GM10248 (cell line): ENCODE measurements at regions of chr9 and their contacts with region 1.

Region 1: DNA sequence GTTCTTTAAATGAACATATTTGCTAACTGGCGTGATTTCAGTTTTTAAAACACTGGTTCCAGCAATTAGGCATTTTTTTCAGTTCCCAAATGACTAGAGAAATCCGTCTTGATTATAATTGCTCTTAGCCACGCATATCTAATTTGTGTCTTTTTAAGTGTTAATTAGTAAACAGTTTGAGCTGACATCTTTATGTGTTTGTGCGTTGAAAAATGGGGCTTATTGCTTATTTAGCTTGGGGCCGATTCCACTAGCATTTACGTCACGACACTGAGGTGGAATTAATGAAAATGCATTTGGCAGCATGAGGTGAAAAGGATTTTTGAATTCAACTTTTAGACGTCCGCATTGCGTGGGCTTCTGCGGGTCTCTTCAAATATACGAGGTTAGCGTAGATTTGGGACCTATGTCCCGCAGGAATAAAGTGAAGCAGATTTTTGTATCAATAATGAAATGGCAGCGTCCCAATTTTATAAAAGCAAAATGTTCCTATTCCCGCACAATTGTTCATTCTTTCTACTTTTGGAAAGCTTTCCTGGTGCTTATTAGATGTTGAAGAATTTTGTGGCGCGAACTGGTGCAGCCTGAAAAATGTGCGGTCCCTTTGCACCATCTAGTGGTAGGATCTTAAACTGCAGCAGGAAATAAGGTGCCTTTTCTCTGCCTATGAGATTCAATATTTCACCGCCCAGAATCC is 122.7 kb upstream of the LMX1B start:
- DNase-seq: peak; percentile 69
- CTCF ChIP-seq: peak; percentile 74

Region 2: DNA sequence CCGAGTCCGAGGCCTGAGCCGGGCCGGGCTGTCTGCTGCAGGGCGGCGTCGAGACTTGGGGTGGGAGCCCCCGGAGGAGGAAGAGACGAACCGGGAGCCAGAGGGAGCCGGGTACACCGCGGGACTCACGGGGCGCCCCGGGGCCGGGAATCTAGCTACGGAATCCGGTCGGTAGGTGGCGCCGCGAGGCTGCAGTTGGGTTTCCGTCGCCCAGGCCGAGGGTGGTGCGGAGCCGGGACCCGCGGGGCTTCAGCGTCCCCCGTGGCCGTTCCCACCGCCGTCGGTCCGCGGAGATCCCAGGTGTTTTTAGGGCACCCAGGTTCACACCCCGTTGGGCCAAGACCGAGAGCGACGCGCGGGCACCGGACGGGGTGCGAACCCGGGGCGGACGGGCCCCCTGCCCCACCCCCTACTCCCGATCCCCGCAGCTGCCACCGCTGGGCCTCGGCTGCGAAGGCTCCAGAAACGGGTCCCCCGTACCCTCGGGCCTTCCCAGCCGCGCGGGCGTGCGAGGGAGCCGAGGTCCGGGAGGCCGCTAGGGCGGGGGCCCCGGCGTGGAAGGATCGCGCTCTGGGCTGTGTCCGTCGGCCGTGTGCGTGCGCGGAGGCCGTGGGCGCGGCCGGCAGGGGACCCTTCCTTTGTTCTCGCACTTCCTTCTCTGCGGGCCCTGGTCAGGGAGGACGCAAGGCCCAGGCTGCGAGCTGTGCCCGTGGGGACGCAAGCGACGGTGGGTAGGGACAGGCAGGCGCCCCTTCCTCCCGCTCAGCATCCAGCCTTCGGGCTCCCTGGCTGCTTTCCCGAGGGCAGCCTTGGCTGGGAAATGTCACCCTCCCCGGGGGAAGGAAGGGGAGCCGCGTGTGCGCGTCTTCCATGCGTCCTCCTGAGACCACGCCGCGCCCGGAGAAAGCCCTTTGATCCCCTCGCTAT is 1082.8 kb before region 1 on chr9:
- CTCF ChIA-PET with region 1: interaction called, 45 read pairs
- POLR2A ChIA-PET with region 1: no interaction called
- DNase-seq: peak; percentile 92
- CTCF ChIP-seq: peak; percentile 88

Region 3: GRCh38 chr9:126301985-126302603 is 188.9 kb before region 1 on chr9:
- CTCF ChIA-PET with region 1: interaction called, 10 read pairs
- POLR2A ChIA-PET with region 1: no interaction called
- DNase-seq: peak; percentile 44
- CTCF ChIP-seq: peak; percentile 51

Region 4: DNA sequence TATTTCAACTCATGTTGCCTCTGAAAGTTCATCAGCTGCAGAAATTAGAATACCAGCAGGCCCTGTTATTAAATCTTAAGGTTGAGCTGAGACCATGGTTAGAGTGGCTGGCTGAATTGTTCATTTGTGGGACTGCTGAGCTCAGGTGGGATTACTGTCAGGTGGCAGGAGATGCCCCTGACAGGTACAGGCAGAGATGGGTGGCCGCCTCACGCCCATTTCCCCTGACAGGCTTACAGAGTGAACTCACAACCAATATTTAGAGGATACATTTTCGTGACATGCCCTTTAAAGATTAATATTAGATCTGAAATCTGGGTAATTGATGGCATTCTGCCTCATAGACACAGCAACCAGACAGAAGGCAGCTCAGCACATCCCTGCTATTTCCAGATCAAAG is 28.4 kb before region 1 on chr9:
- CTCF ChIA-PET with region 1: interaction called, 13 read pairs
- POLR2A ChIA-PET with region 1: no interaction called
- DNase-seq: no peak
- CTCF ChIP-seq: no peak

Region 5: DNA sequence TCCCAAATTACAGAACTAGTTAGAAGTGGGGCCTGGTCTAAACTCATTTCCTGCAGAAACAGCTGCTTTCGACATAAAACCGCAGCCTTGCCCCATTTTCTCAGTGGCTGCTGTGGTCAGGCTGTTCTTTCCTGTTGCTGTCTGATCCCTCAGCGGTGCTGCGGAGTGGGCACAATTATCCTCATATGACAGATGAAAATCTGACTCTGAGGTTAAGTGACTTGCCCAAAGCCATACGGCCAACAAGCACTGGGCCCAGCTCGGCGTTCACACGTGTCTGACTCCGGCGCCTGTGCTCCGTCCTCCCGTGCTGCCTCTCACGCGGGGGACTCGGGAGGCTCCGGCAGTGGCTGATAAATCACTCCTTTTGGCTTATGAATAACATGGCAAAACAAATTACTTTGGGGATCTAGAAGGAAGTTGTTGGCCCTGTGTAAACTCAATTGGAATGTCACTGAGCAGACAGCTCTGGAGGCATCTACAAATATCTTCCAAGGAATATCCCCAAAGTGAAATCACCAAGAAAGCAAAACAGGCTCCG is 19.9 kb before region 1 on chr9:
- CTCF ChIA-PET with region 1: interaction called, 16 read pairs
- POLR2A ChIA-PET with region 1: no interaction called
- DNase-seq: peak; percentile 44
- CTCF ChIP-seq: no peak

Region 6: DNA sequence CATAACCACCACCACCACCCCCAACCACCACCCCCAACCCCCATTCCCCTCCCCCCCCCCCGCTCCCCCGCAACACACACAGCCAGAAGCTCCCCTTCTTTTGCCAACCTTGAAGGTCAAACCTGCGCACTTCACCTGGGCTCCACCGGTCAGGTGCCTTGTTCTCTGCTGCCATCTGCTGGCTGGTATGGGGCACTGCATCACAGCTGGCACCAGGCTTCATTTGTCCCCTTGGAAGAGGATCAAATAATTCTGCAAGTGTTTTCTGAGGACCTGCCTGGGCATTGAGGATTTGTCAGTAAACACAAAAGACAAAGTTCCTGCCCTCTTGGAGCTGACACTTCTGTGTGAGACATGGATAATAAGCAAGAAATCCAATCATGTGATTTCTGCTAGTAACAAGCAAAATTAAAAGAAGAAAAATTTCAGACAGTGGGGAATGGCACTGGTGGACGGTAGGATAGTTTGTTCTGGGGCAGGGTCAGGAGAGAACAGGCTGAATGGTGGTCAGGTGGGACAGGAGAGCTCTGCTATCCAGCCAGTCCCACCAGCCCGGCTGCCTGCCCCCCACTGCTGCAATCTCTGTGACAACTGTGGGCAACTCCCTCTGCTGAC is 67.1 kb after region 1 on chr9:
- CTCF ChIA-PET with region 1: interaction called, 10 read pairs
- POLR2A ChIA-PET with region 1: no interaction called
- DNase-seq: peak; percentile 84
- CTCF ChIP-seq: peak; percentile 99